Astrocyte of the cerebellum (primary cell): ENCODE measurements at regions of chr3 and their contacts with region 1.

Region 1: GRCh38 chr3:189170559-189170958 is 1.2 kb upstream of the TPRG1 start:
- DNase-seq: no peak
- H3K4me3 ChIP-seq: no peak overlapping the region
- CTCF ChIP-seq: no peak

Region 2: GRCh38 chr3:189148081-189148507 is 22.5 kb before region 1 on chr3:
- in situ Hi-C with region 1: loop called (anchors 5 kb)
- DNase-seq: peak; percentile 51
- H3K4me3 ChIP-seq: no peak overlapping the region
- CTCF ChIP-seq: peak; percentile 71